CD8-positive, alpha-beta T cell (primary cell): ENCODE measurements at regions of chr11 and their contacts with region 1.

Region 1: DNA sequence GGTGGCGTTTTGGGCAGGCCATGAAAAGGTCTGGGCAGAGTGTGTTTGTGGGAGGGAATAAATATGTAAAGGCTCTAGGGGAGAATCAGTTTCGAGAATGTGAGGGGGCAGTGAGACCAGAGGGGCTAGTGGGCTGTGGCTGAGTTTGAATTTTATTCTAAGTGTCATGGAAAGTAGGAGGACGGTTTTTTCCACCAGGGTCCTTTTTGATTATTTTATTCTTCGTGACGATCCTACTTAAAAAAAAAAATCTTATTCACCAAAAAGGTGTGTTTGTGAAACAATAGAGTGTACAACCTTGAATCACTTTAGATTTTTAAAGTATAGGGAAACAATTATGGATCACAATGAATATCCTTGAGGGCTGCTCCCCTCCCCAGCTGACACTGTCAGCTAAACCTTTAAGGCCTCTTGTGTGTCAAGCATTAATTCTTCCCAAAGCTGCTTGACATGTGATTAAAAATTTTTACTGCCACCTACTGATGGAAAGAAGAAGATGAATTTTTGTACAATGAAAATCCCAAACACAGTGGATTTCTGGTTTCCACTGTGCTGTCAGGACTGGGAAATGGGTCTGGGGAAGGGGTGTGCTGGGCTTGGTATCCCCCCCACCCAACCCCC is 107.5 kb upstream of the OR4B1 start:
- DNase-seq: peak in 3 of 9 experiments; percentile 31 to 66 (median 48)
- ATAC-seq: peak; percentile 42
- H3K4me3 ChIP-seq: peak overlapping the region; percentile 40 to 49
- H3K4me3 Mint-ChIP-seq: peak overlapping the region; percentile 75
- H3K27ac ChIP-seq: peak overlapping the region; percentile 33 to 68
- H3K27ac Mint-ChIP-seq: peak overlapping the region; percentile 79
- H3K4me1 ChIP-seq: peaks cover 17% of the 10 kb centered on the region
- H3K4me1 Mint-ChIP-seq: peaks cover 38% of the 10 kb centered on the region
- H3K27me3 ChIP-seq: no peaks in the 10 kb centered on the region
- H3K27me3 Mint-ChIP-seq: no peaks in the 10 kb centered on the region
- CTCF ChIP-seq: peak; percentile 10

Region 2: DNA sequence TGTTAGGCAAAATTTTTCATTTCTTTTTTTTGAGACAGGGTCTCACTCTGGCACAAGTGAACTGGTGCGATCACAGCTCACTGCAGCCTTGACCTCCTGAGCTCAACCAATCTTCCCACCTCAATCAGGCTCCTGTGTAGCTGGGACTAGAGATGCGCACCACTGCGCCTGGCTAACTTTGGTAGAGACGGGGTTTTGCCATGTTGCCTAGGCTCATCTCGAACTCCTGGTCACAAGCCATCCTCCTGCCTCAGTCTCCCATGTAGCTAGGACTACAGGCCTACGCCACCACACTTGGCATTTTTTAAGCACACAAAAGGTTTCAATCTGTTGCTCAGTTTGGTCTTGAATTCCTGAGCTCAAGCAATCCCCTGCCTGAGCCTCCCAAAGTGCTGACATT is 351.1 kb before region 1 on chr11:
- CTCF ChIA-PET with region 1: no interaction called
- POLR2A ChIA-PET with region 1: no interaction called
- intact Hi-C with region 1: no loop called
- DNase-seq: peak in 1 of 9 experiments; percentile 27
- ATAC-seq: no peak
- H3K4me3 ChIP-seq: no peak overlapping the region
- H3K4me3 Mint-ChIP-seq: no peak overlapping the region
- H3K27ac ChIP-seq: no peak overlapping the region
- H3K27ac Mint-ChIP-seq: peak overlapping the region; percentile 60
- H3K4me1 ChIP-seq: no peaks in the 10 kb centered on the region
- H3K4me1 Mint-ChIP-seq: peaks cover 19% of the 10 kb centered on the region
- H3K27me3 ChIP-seq: no peaks in the 10 kb centered on the region
- H3K27me3 Mint-ChIP-seq: no peaks in the 10 kb centered on the region
- CTCF ChIP-seq: no peak

Region 3: GRCh38 chr11:47847892-47848635 is 261.1 kb before region 1 on chr11 and contains the start of gene NUP160:
- CTCF ChIA-PET with region 1: interaction called, 3 read pairs
- POLR2A ChIA-PET with region 1: no interaction called
- intact Hi-C with region 1: loop called in 1 of 2 experiments (anchors 1 kb)
- DNase-seq: peak; percentile 70 to 92 (median 88)
- ATAC-seq: peak; percentile 87
- H3K4me3 ChIP-seq: peak within 1 kb of the TSS; percentile 89 to 99
- H3K4me3 Mint-ChIP-seq: peak within 1 kb of the TSS; percentile 100
- H3K27ac ChIP-seq: peak within 1 kb of the TSS; percentile 88 to 95
- H3K27ac Mint-ChIP-seq: peak within 1 kb of the TSS; percentile 99
- H3K4me1 ChIP-seq: peaks cover 35% of the 10 kb centered on the region
- H3K4me1 Mint-ChIP-seq: peaks cover 45% of the 10 kb centered on the region
- H3K27me3 ChIP-seq: no peaks in the 10 kb centered on the region
- H3K27me3 Mint-ChIP-seq: no peaks in the 10 kb centered on the region
- CTCF ChIP-seq: no peak
- total RNA-seq, gene NUP160: 38.6 to 46.6 TPM

Region 4: GRCh38 chr11:47932544-47932943 is 176.6 kb before region 1 on chr11:
- CTCF ChIA-PET with region 1: interaction called, 340 read pairs
- POLR2A ChIA-PET with region 1: interaction called, 7 read pairs
- intact Hi-C with region 1: loop called (anchors 1 kb)
- DNase-seq: no peak
- ATAC-seq: no peak
- H3K4me3 ChIP-seq: no peak overlapping the region
- H3K4me3 Mint-ChIP-seq: no peak overlapping the region
- H3K27ac ChIP-seq: no peak overlapping the region
- H3K27ac Mint-ChIP-seq: no peak overlapping the region
- H3K4me1 ChIP-seq: peaks cover 9% of the 10 kb centered on the region
- H3K4me1 Mint-ChIP-seq: peaks cover 14% of the 10 kb centered on the region
- H3K27me3 ChIP-seq: no peaks in the 10 kb centered on the region
- H3K27me3 Mint-ChIP-seq: no peaks in the 10 kb centered on the region
- CTCF ChIP-seq: no peak

Region 5: GRCh38 chr11:47955061-47955755 is 153.9 kb before region 1 on chr11:
- CTCF ChIA-PET with region 1: interaction called, 10 read pairs
- POLR2A ChIA-PET with region 1: no interaction called
- intact Hi-C with region 1: no loop called
- DNase-seq: peak in 2 of 9 experiments; percentile 10 to 33
- ATAC-seq: no peak
- H3K4me3 ChIP-seq: no peak overlapping the region
- H3K4me3 Mint-ChIP-seq: no peak overlapping the region
- H3K27ac ChIP-seq: no peak overlapping the region
- H3K27ac Mint-ChIP-seq: peak overlapping the region; percentile 49
- H3K4me1 ChIP-seq: peaks cover 16% of the 10 kb centered on the region
- H3K4me1 Mint-ChIP-seq: peaks cover 25% of the 10 kb centered on the region
- H3K27me3 ChIP-seq: no peaks in the 10 kb centered on the region
- H3K27me3 Mint-ChIP-seq: no peaks in the 10 kb centered on the region
- CTCF ChIP-seq: no peak

Region 6: DNA sequence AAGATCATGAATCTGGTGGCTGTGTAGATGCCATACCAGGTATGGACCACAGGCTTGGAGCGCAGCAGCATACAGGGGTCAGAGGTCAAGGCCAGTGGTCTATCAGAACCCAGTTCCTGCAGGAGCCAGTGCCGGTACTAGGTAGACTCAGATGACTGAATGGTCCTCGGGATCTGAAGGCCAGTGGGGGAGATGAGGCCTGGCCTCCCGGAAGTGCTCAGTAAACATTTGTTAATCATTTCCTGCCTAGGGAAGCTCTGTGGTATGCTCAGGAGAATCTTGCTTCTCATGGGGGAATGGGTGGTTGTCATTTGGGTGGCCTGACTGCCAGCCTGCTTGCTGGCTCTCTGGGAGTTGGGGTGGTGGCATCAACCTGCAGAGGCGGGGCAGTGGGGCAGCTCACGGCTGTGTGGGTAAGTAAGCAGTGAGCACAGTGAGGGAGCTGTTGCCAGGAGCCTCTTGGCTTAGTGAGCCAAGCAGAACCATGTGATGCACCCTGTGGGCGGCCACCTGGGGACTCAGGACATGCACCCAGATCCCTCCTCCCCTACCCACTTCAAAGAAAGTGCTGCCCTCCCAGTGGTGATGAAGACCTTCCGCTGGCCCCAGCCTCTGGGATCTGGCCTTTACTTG is 95.8 kb before region 1 on chr11:
- CTCF ChIA-PET with region 1: interaction called, 8 read pairs
- POLR2A ChIA-PET with region 1: no interaction called
- intact Hi-C with region 1: loop called in 1 of 2 experiments (anchors 5 kb)
- DNase-seq: peak in 8 of 9 experiments; percentile 18 to 85 (median 63)
- ATAC-seq: peak; percentile 42
- H3K4me3 ChIP-seq: peak overlapping the region in 1 of 2 experiments; percentile 0
- H3K4me3 Mint-ChIP-seq: peak overlapping the region; percentile 27
- H3K27ac ChIP-seq: peak overlapping the region; percentile 36 to 91
- H3K27ac Mint-ChIP-seq: peak overlapping the region; percentile 92
- H3K4me1 ChIP-seq: peaks cover 85% of the 10 kb centered on the region
- H3K4me1 Mint-ChIP-seq: peaks cover 81% of the 10 kb centered on the region
- H3K27me3 ChIP-seq: no peaks in the 10 kb centered on the region
- H3K27me3 Mint-ChIP-seq: no peaks in the 10 kb centered on the region
- CTCF ChIP-seq: no peak

Region 7: GRCh38 chr11:48034926-48035871 is 74.0 kb before region 1 on chr11:
- CTCF ChIA-PET with region 1: interaction called, 19 read pairs
- POLR2A ChIA-PET with region 1: no interaction called
- intact Hi-C with region 1: loop called in 1 of 2 experiments (anchors 5 kb)
- DNase-seq: no peak
- ATAC-seq: no peak
- H3K4me3 ChIP-seq: no peak overlapping the region
- H3K4me3 Mint-ChIP-seq: no peak overlapping the region
- H3K27ac ChIP-seq: no peak overlapping the region
- H3K27ac Mint-ChIP-seq: peak overlapping the region; percentile 53
- H3K4me1 ChIP-seq: peaks cover 44% of the 10 kb centered on the region
- H3K4me1 Mint-ChIP-seq: peaks cover 63% of the 10 kb centered on the region
- H3K27me3 ChIP-seq: no peaks in the 10 kb centered on the region
- H3K27me3 Mint-ChIP-seq: no peaks in the 10 kb centered on the region
- CTCF ChIP-seq: no peak

Region 8: DNA sequence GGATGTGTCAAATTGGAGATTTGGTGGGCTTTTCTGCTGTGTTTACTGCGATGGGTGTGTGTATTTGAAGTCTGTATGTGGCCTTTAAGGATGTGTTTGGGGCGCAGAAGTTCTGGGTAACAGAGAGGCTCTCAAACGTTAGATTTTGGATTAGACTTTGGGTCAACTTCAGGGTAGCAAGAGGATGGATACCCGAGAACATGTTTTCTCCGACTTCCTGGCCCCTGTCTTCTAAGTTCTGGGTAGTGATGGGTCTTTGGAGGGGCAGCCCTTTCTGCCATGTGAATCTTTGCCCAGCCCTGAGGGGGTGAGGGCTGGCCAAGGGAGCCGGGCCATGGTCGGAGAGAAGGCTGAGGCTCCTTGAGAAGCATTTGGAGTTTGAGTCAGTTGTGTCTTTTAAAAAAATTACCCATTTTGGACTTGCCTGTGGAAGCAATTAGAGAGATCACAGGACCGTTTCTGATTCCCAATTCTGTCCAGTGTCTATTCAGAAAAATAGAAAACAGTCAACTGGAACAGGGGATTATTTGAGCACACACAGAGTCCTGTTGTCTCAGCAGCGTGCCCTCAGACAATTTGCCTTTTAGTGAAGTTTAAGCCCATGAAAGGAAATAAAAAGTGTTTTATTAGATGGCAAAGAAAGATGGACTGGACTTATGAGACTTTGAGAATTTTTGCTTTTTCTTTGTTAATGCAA is 14.4 kb before region 1 on chr11:
- CTCF ChIA-PET with region 1: interaction called, 10 read pairs
- POLR2A ChIA-PET with region 1: interaction called, 4 read pairs
- intact Hi-C with region 1: no loop called
- DNase-seq: peak in 1 of 9 experiments; percentile 27
- ATAC-seq: no peak
- H3K4me3 ChIP-seq: no peak overlapping the region
- H3K4me3 Mint-ChIP-seq: no peak overlapping the region
- H3K27ac ChIP-seq: no peak overlapping the region
- H3K27ac Mint-ChIP-seq: no peak overlapping the region
- H3K4me1 ChIP-seq: peaks cover 5% of the 10 kb centered on the region
- H3K4me1 Mint-ChIP-seq: peaks cover 50% of the 10 kb centered on the region
- H3K27me3 ChIP-seq: no peaks in the 10 kb centered on the region
- H3K27me3 Mint-ChIP-seq: no peaks in the 10 kb centered on the region
- CTCF ChIP-seq: no peak